ENCODE measurements at regions of chr2 and their contacts with region 1.

Region 1: GRCh38 chr2:241271641-241272297 is 43.7 kb downstream of the HDLBP start:
- DNase-seq: peak; percentile 93
- H3K4me3 ChIP-seq: peak overlapping the region; percentile 86 to 100 (median 94)
- H3K27ac ChIP-seq: peak overlapping the region; percentile 97 to 99 (median 98)
- H3K4me1 ChIP-seq: peaks cover 0 to 44% (median 31%) of the 10 kb centered on the region in 4 donors
- H3K27me3 ChIP-seq: no peaks in the 10 kb centered on the region
- CTCF ChIP-seq: no peak
- EP300 ChIP-seq: no peak
- POLR2A ChIP-seq: no peak

Region 2: GRCh38 chr2:241102239-241102803 is 169.4 kb before region 1 on chr2 and contains the start of gene MTERF4:
- intact Hi-C with region 1: loop called (anchors 5 kb)
- DNase-seq: peak; percentile 93
- H3K4me3 ChIP-seq: peak within 1 kb of the TSS; percentile 72 to 87 (median 84)
- H3K27ac ChIP-seq: peak within 1 kb of the TSS; percentile 82 to 88 (median 86)
- H3K4me1 ChIP-seq: peaks cover 0 to 22% (median 20%) of the 10 kb centered on the region in 4 donors
- H3K27me3 ChIP-seq: no peaks in the 10 kb centered on the region
- CTCF ChIP-seq: no peak
- EP300 ChIP-seq: no peak
- POLR2A ChIP-seq: peak in 1 of 2 donors; percentile 27
- total RNA-seq, gene MTERF4: 18.9 to 47.9 (median 33.2) TPM

Region 3: GRCh38 chr2:241112592-241112991 is 159.2 kb before region 1 on chr2:
- intact Hi-C with region 1: no loop called
- DNase-seq: peak; percentile 13
- H3K4me3 ChIP-seq: no peak overlapping the region
- H3K27ac ChIP-seq: no peak overlapping the region
- H3K4me1 ChIP-seq: no peaks in the 10 kb centered on the region
- H3K27me3 ChIP-seq: no peaks in the 10 kb centered on the region
- CTCF ChIP-seq: no peak
- EP300 ChIP-seq: no peak
- POLR2A ChIP-seq: no peak

Region 4: GRCh38 chr2:241289597-241289996 is 17.8 kb after region 1 on chr2:
- intact Hi-C with region 1: no loop called
- DNase-seq: no peak
- H3K4me3 ChIP-seq: no peak overlapping the region
- H3K27ac ChIP-seq: no peak overlapping the region
- H3K4me1 ChIP-seq: no peaks in the 10 kb centered on the region
- H3K27me3 ChIP-seq: no peaks in the 10 kb centered on the region
- CTCF ChIP-seq: no peak
- EP300 ChIP-seq: no peak
- POLR2A ChIP-seq: no peak

Region 5: DNA sequence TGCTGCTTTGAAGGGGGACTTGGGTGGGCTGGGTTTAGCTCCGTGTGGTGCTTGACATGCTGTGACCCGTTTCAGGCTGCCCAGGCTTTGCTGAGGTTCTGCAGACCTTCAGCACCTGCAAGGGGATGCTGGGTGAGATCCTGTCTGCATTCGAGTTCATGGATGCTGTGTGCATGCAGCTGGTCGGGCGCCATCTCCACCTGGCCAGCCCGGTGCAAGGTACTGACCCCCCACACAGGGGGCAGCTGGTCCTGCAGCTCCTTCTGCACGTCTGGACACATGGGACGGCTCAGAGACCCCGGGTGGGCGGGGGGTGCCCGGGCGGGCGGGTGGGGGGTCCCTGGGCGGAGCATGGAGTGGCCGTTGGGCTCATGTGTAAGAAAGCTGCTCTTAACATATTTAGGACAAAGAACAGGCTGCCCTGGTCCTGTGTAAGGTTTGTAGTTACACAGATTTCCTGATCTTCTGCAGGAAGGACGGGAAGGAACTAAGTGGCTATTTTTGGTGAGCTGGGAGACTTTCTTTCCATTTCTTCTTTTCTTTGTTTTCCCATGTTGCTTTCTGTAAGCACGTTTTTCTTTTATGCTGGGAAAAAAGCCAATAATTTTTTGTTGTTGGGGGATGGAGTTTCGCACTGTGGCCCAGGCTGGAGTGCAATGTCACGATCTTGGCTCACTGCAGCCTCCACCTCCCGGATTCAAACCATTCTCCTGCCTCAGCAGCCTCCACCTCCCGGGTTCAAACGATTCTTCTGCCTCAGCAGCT is 478.5 kb after region 1 on chr2:
- intact Hi-C with region 1: no loop called
- DNase-seq: no peak
- H3K4me3 ChIP-seq: no peak overlapping the region
- H3K27ac ChIP-seq: no peak overlapping the region
- H3K4me1 ChIP-seq: no peaks in the 10 kb centered on the region
- H3K27me3 ChIP-seq: no peaks in the 10 kb centered on the region
- CTCF ChIP-seq: no peak
- EP300 ChIP-seq: no peak
- POLR2A ChIP-seq: no peak